ENCODE measurements at regions of chr13 and their contacts with region 1.

Region 1: DNA sequence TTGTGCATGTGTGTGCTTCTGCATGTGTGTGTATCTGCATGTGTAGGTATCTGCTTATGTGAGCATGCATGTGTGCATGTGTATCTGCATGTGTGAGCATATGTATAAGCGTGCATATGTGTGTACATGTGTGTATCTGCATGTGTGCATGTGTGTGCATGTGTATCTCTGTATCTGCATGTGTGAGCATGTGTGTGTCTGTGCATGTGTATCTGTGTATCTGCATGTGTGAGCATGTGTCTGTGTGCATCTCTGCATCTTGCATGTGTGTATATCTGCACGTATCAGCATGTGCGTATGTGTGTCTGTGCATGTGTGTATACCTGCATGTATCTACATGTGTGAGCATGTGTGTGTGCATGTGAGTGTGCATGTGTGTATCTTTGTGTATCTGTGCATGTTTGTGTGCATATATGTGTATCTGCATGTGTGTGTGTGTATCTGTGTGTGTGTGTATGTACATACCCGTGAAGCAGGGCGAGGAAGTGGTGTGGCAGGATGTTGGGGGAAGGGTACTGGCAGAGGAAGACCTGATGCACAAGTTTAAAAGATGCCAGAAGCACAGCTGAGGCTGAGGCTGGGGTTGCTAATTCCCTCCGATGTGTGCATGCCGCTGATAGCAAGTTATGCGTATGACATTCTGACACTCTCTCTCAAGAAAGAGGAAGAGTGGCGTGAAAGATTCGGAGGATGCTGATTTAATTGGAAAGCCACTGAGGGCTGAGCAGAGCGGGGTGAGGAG is 64.2 kb downstream of the TEX29 start:
- DNase-seq: peak in 6 of 9 donors; percentile 49 to 72 (median 68)
- ATAC-seq: peak; percentile 51
- H3K4me3 ChIP-seq: peak overlapping the region; percentile 34
- H3K4me3 Mint-ChIP-seq: peak overlapping the region; percentile 41 to 84 (median 71)
- H3K27ac ChIP-seq: peak overlapping the region; percentile 9
- H3K27ac Mint-ChIP-seq: peak overlapping the region in 8 of 9 donors; percentile 55 to 93 (median 80)
- H3K4me1 ChIP-seq: peaks cover 0 to 38% of the 10 kb centered on the region in 2 donors
- H3K4me1 Mint-ChIP-seq: peaks cover 27 to 59% (median 47%) of the 10 kb centered on the region in 7 donors
- H3K27me3 ChIP-seq: no peaks in the 10 kb centered on the region
- H3K27me3 Mint-ChIP-seq: no peaks in the 10 kb centered on the region

Region 2: GRCh38 chr13:110600261-110600819 is 784.3 kb before region 1 on chr13:
- CTCF ChIA-PET with region 1: no interaction called
- POLR2A ChIA-PET with region 1: no interaction called
- intact Hi-C with region 1: no loop called
- DNase-seq: no peak
- ATAC-seq: no peak
- H3K4me3 ChIP-seq: no peak overlapping the region
- H3K4me3 Mint-ChIP-seq: no peak overlapping the region
- H3K27ac ChIP-seq: no peak overlapping the region
- H3K27ac Mint-ChIP-seq: peak overlapping the region in 1 of 9 donors; percentile 62
- H3K4me1 ChIP-seq: no peaks in the 10 kb centered on the region
- H3K4me1 Mint-ChIP-seq: no peaks in the 10 kb centered on the region
- H3K27me3 ChIP-seq: no peaks in the 10 kb centered on the region
- H3K27me3 Mint-ChIP-seq: peaks cover 0 to 16% (median 4%) of the 10 kb centered on the region in 5 donors

Region 3: DNA sequence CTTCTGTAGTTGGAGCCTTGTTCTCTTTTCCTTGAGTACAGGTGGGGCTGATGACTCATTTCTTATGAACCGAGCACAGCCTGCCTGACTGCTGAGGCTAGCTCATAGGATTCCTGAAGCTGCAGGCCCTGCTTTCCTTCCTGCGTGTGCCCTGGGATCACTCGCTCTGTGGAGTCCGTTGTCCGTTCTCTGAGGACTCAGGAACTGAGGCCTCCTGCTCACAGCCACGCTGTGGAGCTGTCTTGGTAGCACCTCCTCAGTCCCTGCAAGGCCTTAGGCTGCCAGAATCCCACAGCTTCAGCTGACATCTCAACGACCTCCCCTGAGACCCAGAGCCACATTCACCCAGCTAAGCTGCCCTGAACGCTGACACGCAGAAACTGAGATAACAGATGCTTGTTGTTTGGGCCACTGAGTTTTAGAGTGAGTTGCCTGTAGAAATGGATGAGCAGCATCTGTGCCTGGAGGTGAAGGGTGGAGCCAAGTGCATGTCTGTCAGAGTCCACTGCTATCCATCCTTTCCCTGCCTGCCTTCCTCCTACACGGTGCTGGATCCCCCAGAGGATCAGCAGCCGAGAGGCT is 196.6 kb before region 1 on chr13:
- CTCF ChIA-PET with region 1: no interaction called
- POLR2A ChIA-PET with region 1: no interaction called
- intact Hi-C with region 1: no loop called
- DNase-seq: no peak
- ATAC-seq: no peak
- H3K4me3 ChIP-seq: no peak overlapping the region
- H3K4me3 Mint-ChIP-seq: peak overlapping the region; percentile 70 to 96 (median 84)
- H3K27ac ChIP-seq: no peak overlapping the region
- H3K27ac Mint-ChIP-seq: peak overlapping the region; percentile 79 to 93 (median 90)
- H3K4me1 ChIP-seq: peaks cover 50 to 66% of the 10 kb centered on the region in 2 donors
- H3K4me1 Mint-ChIP-seq: peaks cover 77 to 100% (median 92%) of the 10 kb centered on the region in 7 donors
- H3K27me3 ChIP-seq: no peaks in the 10 kb centered on the region
- H3K27me3 Mint-ChIP-seq: no peaks in the 10 kb centered on the region

Region 4: GRCh38 chr13:111304041-111304544 is 80.5 kb before region 1 on chr13:
- CTCF ChIA-PET with region 1: no interaction called
- POLR2A ChIA-PET with region 1: no interaction called
- intact Hi-C with region 1: no loop called
- DNase-seq: no peak
- ATAC-seq: no peak
- H3K4me3 ChIP-seq: no peak overlapping the region
- H3K4me3 Mint-ChIP-seq: no peak overlapping the region
- H3K27ac ChIP-seq: no peak overlapping the region
- H3K27ac Mint-ChIP-seq: peak overlapping the region in 2 of 9 donors; percentile 18 to 81
- H3K4me1 ChIP-seq: no peaks in the 10 kb centered on the region
- H3K4me1 Mint-ChIP-seq: peaks cover 0 to 17% (median 0%) of the 10 kb centered on the region in 7 donors
- H3K27me3 ChIP-seq: no peaks in the 10 kb centered on the region
- H3K27me3 Mint-ChIP-seq: no peaks in the 10 kb centered on the region

Region 5: GRCh38 chr13:111429064-111429558 is 44.5 kb after region 1 on chr13:
- CTCF ChIA-PET with region 1: no interaction called
- POLR2A ChIA-PET with region 1: no interaction called
- intact Hi-C with region 1: loop called in 1 of 2 experiments (anchors 2 kb)
- DNase-seq: peak in 6 of 9 donors; percentile 10 to 53 (median 40)
- ATAC-seq: peak; percentile 59
- H3K4me3 ChIP-seq: no peak overlapping the region
- H3K4me3 Mint-ChIP-seq: peak overlapping the region in 8 of 10 donors; percentile 20 to 62 (median 48)
- H3K27ac ChIP-seq: no peak overlapping the region
- H3K27ac Mint-ChIP-seq: no peak overlapping the region
- H3K4me1 ChIP-seq: no peaks in the 10 kb centered on the region
- H3K4me1 Mint-ChIP-seq: peaks cover 0 to 6% (median 0%) of the 10 kb centered on the region in 7 donors
- H3K27me3 ChIP-seq: no peaks in the 10 kb centered on the region
- H3K27me3 Mint-ChIP-seq: peaks cover 4 to 25% (median 20%) of the 10 kb centered on the region in 5 donors